A549 (cell line): ENCODE measurements at regions of chr1 and their contacts with region 1.

Region 1: DNA sequence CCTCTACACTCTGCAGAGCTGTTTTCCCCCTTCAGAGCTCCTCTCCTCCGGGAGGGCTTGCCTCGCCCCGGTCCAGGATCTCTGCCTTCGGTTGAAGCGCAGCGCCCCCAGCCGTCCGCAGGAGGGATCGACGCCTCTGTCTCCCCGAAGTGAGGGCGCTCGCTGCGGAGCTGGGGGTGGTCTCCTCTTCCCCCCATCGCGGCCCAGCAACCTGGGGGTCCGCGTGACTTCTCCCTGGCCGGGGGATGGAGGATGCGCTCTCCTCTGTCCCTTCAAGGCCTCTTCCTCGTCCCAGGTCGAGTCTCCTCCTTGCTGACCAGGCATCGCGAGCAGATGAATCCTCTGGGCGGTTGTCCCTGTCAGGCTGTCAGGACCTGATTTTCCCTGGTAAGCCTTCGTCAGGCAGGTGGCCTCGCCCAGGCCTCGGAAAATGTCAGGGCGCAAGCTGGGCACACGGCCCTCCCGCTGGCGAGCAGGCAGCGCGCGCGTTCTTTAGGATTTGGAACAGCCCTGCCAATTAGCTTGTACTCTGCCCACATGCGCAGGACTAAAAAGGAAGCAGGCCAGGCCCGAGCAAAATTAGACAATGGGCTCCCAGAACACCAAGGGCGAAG is 90.5 kb downstream of the EDEM3 start:
- DNase-seq: peak; percentile 51 to 56
- ATAC-seq: peak; percentile 90 to 98
- H3K4me3 ChIP-seq: 0 out of 3 replicates have a peak overlapping the region, but pooled peaks have one; percentile 25
- H3K27ac ChIP-seq: peak overlapping the region; percentile 60 to 75
- H3K4me1 ChIP-seq: no peaks in the 10 kb centered on the region
- CTCF ChIP-seq: peak; percentile 86
- EP300 ChIP-seq: no peak
- POLR2A ChIP-seq: no peak
- RAD21 ChIP-seq: peak; percentile 83 to 91

Region 2: GRCh38 chr1:184075055-184076029 is 588.8 kb before region 1 on chr1:
- CTCF ChIA-PET with region 1: interaction called, 28 read pairs
- POLR2A ChIA-PET with region 1: no interaction called
- DNase-seq: peak; percentile 37 to 48
- ATAC-seq: peak; percentile 73 to 82; a peak in 4 of 6 replicates
- H3K4me3 ChIP-seq: no peak overlapping the region
- H3K27ac ChIP-seq: no peak overlapping the region
- H3K4me1 ChIP-seq: no peaks in the 10 kb centered on the region
- CTCF ChIP-seq: peak; percentile 80
- EP300 ChIP-seq: no peak
- POLR2A ChIP-seq: no peak
- RAD21 ChIP-seq: peak; percentile 82 to 84

Region 3: DNA sequence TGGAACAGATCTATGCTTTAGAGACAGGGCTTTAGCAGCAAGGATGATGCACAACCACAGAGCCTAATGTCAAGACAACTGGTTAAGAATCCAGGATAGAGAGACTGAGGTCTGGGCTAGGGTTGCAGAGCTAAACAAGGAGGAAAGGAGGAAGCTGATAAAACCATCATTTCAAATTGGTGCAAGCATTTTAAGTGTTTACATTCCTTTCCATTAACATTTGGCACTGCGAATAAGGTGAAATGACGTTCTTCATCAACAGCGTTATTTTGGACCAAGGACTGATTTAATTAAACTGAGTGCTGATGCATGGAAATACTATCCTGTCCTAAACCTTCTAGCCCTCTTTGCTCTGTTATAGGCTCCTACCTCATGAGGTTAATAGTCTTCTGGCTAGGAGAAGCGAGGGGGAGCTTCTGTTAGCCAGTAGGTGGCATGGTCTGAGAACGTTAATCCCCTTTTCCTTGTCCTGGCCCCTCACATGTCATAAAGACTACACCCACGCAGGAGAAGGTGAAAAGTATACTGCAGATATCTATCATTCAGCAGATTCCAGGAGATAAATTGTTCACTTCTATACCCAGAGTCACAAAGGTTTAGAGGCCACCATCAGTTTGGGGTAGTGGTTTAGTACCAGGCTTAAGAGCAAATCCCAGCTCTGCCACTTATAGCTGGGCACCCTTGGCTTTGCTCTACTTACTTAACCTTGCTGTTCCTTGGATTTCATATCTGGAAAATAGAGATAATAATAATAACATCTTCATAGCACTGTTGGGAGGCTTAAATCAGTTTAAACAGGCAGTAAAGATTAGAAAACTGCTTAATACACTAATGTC is 284.8 kb before region 1 on chr1:
- CTCF ChIA-PET with region 1: interaction called, 21 read pairs
- POLR2A ChIA-PET with region 1: no interaction called
- DNase-seq: peak in 1 of 2 experiments; percentile 31
- ATAC-seq: peak; percentile 70 to 80; a peak in 3 of 6 replicates
- H3K4me3 ChIP-seq: no peak overlapping the region
- H3K27ac ChIP-seq: no peak overlapping the region
- H3K4me1 ChIP-seq: no peaks in the 10 kb centered on the region
- CTCF ChIP-seq: peak; percentile 21; the same call in 2 of the 3 replicates
- EP300 ChIP-seq: no peak
- POLR2A ChIP-seq: no peak
- RAD21 ChIP-seq: peak in 1 of 2 experiments; percentile 46; a peak in 3 of 5 replicates

Region 4: DNA sequence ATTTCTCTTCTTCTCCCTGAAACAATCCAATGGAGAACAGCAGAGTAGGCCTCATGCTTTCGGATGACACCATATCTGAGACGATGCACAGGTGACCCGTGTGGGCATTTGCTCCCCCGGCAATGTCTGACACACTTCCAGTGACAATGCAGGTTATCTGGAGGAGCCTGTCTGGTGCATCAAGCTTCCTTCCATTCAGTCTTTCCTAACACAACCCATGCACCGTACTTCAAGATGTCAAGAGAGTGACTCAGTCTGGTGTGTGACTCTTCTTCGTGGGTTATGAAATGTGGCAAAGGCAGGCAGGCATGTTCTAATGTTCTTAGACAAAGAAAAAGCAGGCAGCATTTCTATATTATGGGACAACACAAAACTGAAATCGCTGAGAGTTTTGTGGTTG is 68.6 kb before region 1 on chr1:
- CTCF ChIA-PET with region 1: interaction called, 16 read pairs
- POLR2A ChIA-PET with region 1: no interaction called
- DNase-seq: peak in 1 of 2 experiments; percentile 46
- ATAC-seq: peak; percentile 42 to 51; a peak in 5 of 6 replicates
- H3K4me3 ChIP-seq: no peak overlapping the region
- H3K27ac ChIP-seq: peak overlapping the region; percentile 83
- H3K4me1 ChIP-seq: peaks cover 60% of the 10 kb centered on the region
- CTCF ChIP-seq: no peak
- EP300 ChIP-seq: 0 out of 5 replicates have a peak, but pooled peaks of 1 of the 2 experiments have one; percentile 11
- POLR2A ChIP-seq: no peak
- RAD21 ChIP-seq: no peak

Region 5: DNA sequence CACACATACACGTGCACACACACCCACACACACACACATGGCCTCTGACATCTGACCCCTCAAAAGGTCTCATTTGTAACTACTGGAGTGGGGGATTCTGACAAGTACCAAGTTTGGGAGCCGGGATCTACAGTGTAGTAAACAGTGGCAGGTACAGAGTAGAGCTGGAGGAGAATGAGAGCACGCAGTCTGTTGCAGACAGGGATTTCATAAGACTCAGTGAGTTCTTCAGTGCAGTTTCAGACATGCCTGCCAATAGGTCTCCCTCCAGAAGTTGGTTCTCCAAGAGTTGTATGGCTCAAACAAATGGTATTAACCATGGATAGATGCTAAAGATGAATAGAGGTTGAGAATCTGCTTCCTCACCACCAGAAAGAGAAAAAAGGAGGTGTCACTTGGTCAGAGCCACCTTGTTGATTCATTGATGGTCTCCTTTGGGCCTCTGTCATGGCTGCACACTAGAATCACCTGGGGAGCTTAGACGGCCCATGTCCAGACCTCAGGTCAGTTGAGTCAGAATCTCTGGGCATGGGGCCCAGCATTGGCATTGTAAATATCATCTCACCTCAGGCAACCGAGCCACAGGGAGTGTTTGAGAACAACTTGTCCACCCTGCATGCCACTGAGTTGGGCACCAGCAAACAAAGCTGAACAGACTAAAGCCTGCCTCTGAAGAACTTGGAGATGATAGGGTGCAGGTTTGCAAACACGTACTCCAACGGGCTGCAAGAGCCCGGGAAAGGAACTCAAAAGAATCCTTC is 31.6 kb before region 1 on chr1:
- CTCF ChIA-PET with region 1: interaction called, 20 read pairs
- POLR2A ChIA-PET with region 1: no interaction called
- DNase-seq: no peak
- ATAC-seq: peak in 1 of 2 experiments; percentile 17; a peak in 1 of 6 replicates
- H3K4me3 ChIP-seq: no peak overlapping the region
- H3K27ac ChIP-seq: peak overlapping the region; percentile 46 to 51; a peak in 2 of 6 replicates
- H3K4me1 ChIP-seq: peaks cover 18% of the 10 kb centered on the region; the same call in 2 of the 3 replicates
- CTCF ChIP-seq: no peak
- EP300 ChIP-seq: no peak
- POLR2A ChIP-seq: no peak
- RAD21 ChIP-seq: no peak

Region 6: DNA sequence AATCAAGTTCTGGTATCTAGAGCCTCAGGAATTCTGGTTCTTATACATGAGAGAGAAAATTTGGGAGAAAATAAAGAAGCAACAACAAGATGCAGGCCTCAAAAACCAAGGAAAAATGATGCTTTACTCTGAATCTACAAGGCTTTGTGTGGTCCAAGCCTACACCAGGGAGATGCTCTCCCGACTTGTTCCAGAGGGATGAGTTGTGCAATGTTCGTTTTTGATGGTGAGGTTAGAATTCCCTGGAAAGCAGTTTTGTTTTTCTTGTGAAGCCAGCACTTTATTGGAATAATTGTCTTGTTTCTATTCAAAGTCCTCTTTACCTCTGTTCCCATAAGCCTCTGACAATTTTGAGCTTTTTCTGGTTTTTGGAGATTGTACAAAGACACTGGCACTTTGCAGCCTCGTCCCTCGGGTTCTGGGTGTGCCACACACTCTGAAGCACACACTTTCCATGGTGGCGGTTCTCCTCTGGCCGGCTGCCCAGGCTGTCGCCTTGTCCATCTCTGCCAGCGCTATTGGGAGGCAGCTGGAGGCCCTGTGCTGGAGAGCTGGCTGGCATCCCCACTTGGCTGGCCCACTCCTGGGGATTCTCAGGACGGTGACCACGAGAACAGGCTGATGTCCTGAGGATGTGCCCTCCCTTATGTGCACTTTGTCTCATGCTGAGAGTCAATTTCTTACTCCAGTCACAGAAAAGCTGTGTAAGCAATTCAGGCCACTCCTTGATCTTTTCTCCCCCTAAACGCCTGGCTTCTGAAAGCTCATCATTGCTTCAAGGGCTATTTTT is 20.3 kb after region 1 on chr1:
- CTCF ChIA-PET with region 1: interaction called, 10 read pairs
- POLR2A ChIA-PET with region 1: no interaction called
- DNase-seq: no peak
- ATAC-seq: peak; percentile 22 to 32; a peak in 1 of 6 replicates
- H3K4me3 ChIP-seq: no peak overlapping the region
- H3K27ac ChIP-seq: no peak overlapping the region
- H3K4me1 ChIP-seq: no peaks in the 10 kb centered on the region
- CTCF ChIP-seq: no peak
- EP300 ChIP-seq: no peak
- POLR2A ChIP-seq: no peak
- RAD21 ChIP-seq: no peak